Spleen (tissue), 13 donors: ENCODE measurements at regions of chr1 and their contacts with region 1.

Region 1: DNA sequence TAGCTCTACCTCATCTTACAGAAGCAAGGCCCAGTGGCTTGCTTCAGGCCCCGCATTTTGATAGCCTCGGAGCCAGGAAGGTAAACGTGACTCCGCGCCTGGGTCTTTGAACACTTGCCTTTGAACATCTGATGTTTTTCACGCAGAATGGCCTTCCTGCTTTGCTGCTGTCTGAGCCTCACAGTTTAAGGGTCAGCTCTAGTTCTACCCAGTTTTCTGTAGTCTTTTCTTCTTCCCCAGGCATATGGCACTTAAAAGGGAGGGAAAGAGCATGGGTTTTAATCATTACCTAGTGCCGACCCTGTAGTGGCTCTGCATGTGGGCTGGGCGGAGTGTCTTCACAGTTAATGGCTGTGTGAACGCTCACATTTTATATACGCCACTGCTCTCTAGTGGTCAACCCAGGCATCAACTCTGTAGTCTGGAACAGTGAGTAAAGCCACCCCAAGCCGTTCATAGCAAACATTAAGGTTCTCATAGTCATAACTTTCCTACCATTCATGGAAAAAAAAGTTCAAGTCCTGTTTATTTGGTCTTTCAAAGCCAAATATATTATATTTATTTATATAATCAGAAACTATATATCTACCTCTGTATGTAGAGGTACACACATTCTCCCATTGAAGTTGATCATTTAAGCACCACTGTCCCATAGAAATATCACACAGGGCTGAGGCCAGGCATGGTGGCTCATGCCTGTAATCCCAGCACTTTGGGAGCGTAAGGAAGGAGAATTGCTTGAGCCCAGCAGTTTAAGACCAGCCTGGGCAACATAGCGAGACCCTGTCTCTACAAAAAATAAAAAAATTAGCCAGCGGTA is 78.1 kb downstream of the IER5 start:
- DNase-seq: no peak
- H3K4me3 ChIP-seq: no peak overlapping the region
- H3K27ac ChIP-seq: no peak overlapping the region
- H3K4me1 ChIP-seq: peaks cover 0 to 9% (median 7%) of the 10 kb centered on the region in 6 donors
- H3K27me3 ChIP-seq: no peaks in the 10 kb centered on the region
- CTCF ChIP-seq: peak; percentile 70 to 89 (median 85)
- POLR2A ChIP-seq: no peak

Region 2: DNA sequence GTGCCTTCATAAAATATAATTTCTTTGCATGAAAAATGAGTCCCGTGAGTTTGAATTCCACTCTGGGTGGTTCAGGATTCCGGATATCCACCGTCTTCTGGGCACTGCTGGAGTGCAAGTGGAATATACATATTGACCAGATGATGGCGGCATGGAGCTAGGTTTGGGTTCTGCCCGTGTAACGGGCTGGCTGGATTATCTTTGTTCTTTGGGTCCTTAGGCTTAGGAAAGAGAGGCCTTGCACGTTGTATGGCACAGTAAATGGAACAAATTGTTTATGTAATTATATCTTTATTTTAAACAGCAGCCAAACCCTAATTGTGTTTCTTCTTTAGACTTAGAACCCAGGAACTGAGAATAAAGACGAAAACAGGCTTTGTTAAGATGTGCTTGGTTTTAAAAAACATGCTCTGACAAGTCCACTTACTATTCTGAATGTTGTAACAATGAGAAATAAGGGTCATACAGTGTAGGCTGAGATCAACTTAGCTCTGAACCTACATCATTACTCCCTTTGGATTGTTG is 650.7 kb before region 1 on chr1:
- intact Hi-C with region 1: loop called (anchors 5 kb)
- DNase-seq: no peak
- H3K4me3 ChIP-seq: no peak overlapping the region
- H3K27ac ChIP-seq: no peak overlapping the region
- H3K4me1 ChIP-seq: peaks cover 0 to 16% (median 6%) of the 10 kb centered on the region in 6 donors
- H3K27me3 ChIP-seq: peaks cover 0 to 10% (median 0%) of the 10 kb centered on the region in 7 donors
- CTCF ChIP-seq: peak; percentile 57 to 90 (median 82)
- POLR2A ChIP-seq: no peak

Region 3: DNA sequence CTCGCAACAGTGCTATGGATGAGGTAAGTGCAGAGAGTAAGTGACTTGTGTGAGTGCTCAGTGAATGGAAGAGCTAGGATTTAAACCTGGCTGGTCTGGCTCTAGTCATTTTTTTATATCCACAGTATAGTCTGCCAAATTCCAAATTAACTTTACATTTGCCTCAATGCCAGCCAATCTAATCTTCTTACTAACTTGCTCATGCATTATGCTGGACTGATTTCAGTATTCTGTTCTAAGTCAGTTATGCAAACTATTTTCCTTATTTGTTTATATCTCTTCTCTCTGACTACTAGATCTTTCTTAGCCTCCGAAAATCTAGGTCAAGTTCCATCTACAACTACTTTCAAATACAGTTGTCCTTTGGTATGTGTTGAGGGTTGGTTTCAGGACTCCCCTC is 401.4 kb before region 1 on chr1:
- intact Hi-C with region 1: no loop called
- DNase-seq: no peak
- H3K4me3 ChIP-seq: no peak overlapping the region
- H3K27ac ChIP-seq: no peak overlapping the region
- H3K4me1 ChIP-seq: peaks cover 0 to 3% (median 0%) of the 10 kb centered on the region in 6 donors
- H3K27me3 ChIP-seq: no peaks in the 10 kb centered on the region
- CTCF ChIP-seq: no peak
- POLR2A ChIP-seq: no peak

Region 4: DNA sequence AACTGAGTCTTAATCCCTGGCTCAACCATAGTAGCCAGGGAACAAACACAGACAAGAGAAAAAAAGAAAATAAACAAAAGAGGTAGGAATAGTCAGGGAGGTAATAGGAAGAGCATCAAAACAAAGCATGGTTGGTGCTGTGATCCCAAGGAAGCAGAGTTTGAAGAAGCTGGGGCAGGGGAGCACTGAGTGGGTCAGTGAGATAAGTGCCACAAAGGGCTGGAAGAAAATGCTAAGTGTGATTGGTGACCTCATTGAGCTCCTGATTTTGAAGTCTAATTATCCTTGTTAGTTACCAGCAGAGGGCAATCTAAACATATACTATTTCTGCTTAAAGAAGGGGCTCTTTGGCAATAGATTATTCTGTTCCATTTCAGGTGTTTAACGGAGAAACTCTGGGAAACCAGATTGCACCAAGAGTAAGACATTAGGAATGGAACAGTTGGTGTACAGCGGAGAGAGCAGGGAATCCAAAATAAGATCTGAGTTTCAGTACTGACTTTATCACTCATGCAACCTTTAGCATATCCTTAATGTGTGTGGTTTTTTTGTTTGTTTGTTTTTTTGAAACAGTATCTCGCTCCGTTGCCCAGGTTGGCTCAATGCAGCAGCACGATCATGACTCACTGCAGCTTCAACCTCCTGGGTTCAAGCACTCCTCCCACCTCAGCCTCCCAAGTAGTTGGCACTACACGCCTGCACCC is 284.6 kb before region 1 on chr1:
- intact Hi-C with region 1: loop called (anchors 5 kb)
- DNase-seq: no peak
- H3K4me3 ChIP-seq: no peak overlapping the region
- H3K27ac ChIP-seq: no peak overlapping the region
- H3K4me1 ChIP-seq: no peaks in the 10 kb centered on the region
- H3K27me3 ChIP-seq: no peaks in the 10 kb centered on the region
- CTCF ChIP-seq: peak in 8 of 11 experiments; percentile 14 to 56 (median 42)
- POLR2A ChIP-seq: no peak

Region 5: GRCh38 chr1:181562395-181562794 is 395.8 kb after region 1 on chr1:
- intact Hi-C with region 1: no loop called
- DNase-seq: no peak
- H3K4me3 ChIP-seq: no peak overlapping the region
- H3K27ac ChIP-seq: no peak overlapping the region
- H3K4me1 ChIP-seq: no peaks in the 10 kb centered on the region
- H3K27me3 ChIP-seq: peaks cover 0 to 5% (median 0%) of the 10 kb centered on the region in 7 donors
- CTCF ChIP-seq: no peak
- POLR2A ChIP-seq: no peak